ENCODE measurements at regions of chr1 and their contacts with region 1.

Region 1: GRCh38 chr1:94734963-94735899 is 84.9 kb upstream of the SLC44A3 start:
- DNase-seq: peak; percentile 46
- ATAC-seq: peak; percentile 68 to 74

Region 2: DNA sequence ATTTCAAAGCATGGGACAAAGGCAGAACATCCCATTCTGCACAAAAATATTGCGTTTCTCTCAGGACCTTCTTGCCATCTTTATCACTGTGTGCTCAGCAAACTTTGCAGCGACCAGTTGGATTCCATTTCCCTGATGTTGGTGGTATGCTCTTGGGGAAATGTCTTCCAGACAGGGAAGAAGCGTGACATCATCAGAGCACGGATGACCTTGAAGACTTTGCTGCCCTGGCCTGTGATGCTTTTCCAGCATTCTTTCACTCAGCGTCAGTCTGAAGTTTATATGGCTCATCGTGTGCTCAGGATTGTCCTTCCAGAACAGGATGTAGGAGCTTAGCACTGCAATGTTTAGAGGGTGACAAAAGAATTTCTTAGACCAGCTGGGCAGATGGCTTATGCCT is 62.3 kb before region 1 on chr1:
- intact Hi-C with region 1: no loop called
- DNase-seq: no peak
- ATAC-seq: no peak

Region 3: DNA sequence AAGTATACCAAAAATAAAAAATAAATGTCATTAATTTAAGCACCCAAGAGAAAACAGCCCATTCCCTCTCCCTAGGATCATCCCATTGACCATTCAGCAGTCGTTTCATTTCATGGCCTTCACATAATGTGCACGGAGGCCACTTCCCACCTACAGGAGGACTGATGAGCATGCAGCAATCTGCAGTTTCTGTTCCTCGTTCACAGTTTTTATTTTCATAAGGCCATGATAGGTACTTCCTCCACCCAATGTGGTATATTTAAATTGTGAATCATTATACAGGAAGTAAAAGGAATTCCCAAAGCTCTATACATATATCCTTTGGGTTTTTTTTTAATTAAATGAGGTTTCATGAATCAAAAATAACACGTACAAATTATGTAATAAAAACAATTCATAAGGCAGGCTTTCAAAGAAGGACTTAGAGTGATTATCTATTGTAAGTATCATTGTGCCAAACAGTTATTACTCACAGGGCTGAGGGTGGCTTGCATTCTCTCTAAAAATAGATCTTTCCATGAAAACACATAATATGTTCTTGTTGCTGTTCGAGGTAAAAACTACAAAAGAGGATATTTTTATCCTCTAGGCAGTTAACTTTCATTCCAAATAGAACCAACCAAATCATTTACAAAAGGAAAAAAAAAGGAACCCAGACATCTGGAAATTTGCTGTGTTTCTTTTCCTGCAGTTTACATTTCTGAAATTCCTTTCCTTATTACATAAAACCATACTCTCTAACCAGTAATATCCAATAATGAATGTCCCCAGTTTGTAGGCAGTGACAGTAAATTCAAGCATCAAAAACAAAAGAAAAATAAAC is 57.5 kb after region 1 on chr1:
- intact Hi-C with region 1: loop called in 1 of 2 experiments (anchors 10 kb)
- DNase-seq: no peak
- ATAC-seq: peak; percentile 53 to 83

Region 4: DNA sequence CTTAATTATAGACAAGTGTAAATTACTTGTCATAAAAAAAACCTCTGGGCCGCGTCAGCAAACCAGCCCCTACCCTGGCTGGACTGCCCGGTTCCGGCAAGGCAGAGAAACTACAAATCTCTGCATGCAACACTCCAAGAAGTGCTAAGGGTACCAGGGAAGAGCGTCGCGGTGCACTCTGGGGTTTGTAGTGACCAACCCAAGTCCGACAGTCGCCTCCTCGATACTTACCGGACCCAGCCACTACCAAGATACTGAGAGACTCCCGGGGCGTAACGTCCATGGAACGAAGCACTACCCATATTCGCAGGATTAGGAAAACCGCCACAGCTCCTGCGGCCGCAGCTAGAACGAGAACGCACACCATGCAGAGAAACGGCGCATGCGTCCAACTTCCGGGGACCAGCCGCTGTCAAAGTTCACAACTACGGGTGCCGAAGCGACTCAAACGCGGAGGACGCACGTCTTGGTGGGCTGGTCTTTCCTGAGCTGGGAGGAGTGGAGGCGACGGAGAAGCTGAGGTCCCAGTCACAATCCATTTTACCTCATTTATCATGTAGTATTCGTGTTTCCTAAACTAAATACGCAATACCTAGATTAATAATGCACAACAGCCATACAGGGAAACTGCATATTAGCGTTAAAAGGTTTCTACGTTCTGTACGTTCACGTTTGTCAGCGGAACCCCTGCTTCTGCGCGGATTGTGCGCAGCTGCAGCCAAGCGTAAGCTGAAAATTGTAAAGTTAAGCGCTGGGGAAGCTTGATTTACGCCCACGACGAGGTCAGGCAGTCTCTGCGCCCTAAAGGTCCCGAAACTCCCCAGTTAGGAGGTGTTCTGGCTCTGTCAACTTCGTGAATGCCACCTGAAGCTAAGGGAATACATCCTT is 337.5 kb after region 1 on chr1 and contains the start of gene ALG14:
- intact Hi-C with region 1: no loop called
- DNase-seq: peak; percentile 95
- ATAC-seq: peak; percentile 99
- total RNA-seq, gene ALG14: 2.5 to 4.3 TPM